PC-9 (cell line): ENCODE measurements at regions of chr9 and their contacts with region 1.

Region 1: GRCh38 chr9:92242260-92243136 is 51.0 kb downstream of the IARS1 start:
- DNase-seq: no peak
- H3K4me3 ChIP-seq: no peak overlapping the region
- H3K27ac ChIP-seq: no peak overlapping the region
- H3K4me1 ChIP-seq: no peaks in the 10 kb centered on the region
- H3K27me3 ChIP-seq: no peaks in the 10 kb centered on the region
- CTCF ChIP-seq: peak; percentile 26; the same call in 1 of the 2 replicates

Region 2: DNA sequence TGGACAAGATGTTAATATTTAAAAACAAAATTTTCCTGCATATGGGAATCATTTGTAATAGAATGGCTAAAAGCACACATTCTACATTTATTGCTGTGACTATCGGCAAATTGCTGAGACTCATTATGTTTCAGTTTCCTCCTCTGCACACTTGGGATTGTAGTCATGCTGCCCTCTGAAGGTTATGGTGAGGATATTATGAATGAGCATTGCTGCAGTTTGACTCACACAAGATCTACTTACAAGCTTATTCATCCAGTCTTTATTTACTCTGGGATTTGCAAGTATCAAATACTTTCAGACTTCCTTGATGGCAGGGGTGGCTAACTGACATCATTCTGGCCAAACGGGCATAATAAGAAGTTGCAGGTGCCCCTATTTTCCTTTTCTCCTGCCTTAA is 809.3 kb before region 1 on chr9:
- CTCF ChIA-PET with region 1: no interaction called
- POLR2A ChIA-PET with region 1: no interaction called
- intact Hi-C with region 1: no loop called
- DNase-seq: peak; percentile 38 to 96
- H3K4me3 ChIP-seq: no peak overlapping the region
- H3K27ac ChIP-seq: peak overlapping the region; percentile 32; the same call in 1 of the 2 replicates
- H3K4me1 ChIP-seq: peaks cover 8% of the 10 kb centered on the region; the same call in 1 of the 2 replicates
- H3K27me3 ChIP-seq: no peaks in the 10 kb centered on the region
- CTCF ChIP-seq: peak; percentile 64

Region 3: GRCh38 chr9:92276331-92277032 is 34.0 kb after region 1 on chr9:
- CTCF ChIA-PET with region 1: no interaction called
- POLR2A ChIA-PET with region 1: no interaction called
- intact Hi-C with region 1: loop called (anchors 5 kb)
- DNase-seq: no peak
- H3K4me3 ChIP-seq: no peak overlapping the region
- H3K27ac ChIP-seq: no peak overlapping the region
- H3K4me1 ChIP-seq: no peaks in the 10 kb centered on the region
- H3K27me3 ChIP-seq: no peaks in the 10 kb centered on the region
- CTCF ChIP-seq: no peak

Region 4: GRCh38 chr9:92308893-92309292 is 66.4 kb after region 1 on chr9:
- CTCF ChIA-PET with region 1: no interaction called
- POLR2A ChIA-PET with region 1: no interaction called
- intact Hi-C with region 1: loop called (anchors 10 kb)
- DNase-seq: no peak
- H3K4me3 ChIP-seq: no peak overlapping the region
- H3K27ac ChIP-seq: no peak overlapping the region
- H3K4me1 ChIP-seq: no peaks in the 10 kb centered on the region
- H3K27me3 ChIP-seq: no peaks in the 10 kb centered on the region
- CTCF ChIP-seq: no peak

Region 5: GRCh38 chr9:92481040-92481633 is 238.6 kb after region 1 on chr9:
- CTCF ChIA-PET with region 1: no interaction called
- POLR2A ChIA-PET with region 1: no interaction called
- intact Hi-C with region 1: no loop called
- DNase-seq: peak in 1 of 2 experiments; percentile 71
- H3K4me3 ChIP-seq: no peak overlapping the region
- H3K27ac ChIP-seq: peak overlapping the region; percentile 56
- H3K4me1 ChIP-seq: peaks cover 28% of the 10 kb centered on the region
- H3K27me3 ChIP-seq: no peaks in the 10 kb centered on the region
- CTCF ChIP-seq: no peak